Activated CD4-positive, alpha-beta memory T cell treated with anti-CD3 and anti-CD28 coated beads, Interleukin-2, amount 10 ng/mL, durations not matched to agents 7 days and 5 days (primary cell): ENCODE measurements at regions of chr5 and their contacts with region 1.

Region 1: DNA sequence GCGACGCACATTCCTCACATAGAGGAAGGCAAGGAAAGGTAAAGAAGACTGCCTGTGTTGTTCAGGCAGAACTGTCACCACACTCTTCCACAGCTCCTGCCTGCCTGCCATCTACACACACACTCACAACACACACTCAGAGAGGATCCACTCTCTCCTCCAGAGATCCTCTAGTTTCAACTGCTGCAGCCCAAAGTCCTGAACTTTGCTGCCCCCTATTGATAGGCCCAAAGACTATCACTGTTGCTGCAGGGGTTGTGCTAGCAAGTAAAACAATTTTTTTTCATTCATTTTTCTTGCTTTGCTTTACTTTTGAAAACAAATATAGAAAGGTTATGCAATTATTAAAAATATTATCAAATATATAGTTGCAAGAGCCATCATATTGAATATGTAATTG is 5.9 kb upstream of the CFAP90 start:
- DNase-seq: peak; percentile 58
- H3K4me3 Mint-ChIP-seq: no peak overlapping the region
- H3K27ac Mint-ChIP-seq: no peak overlapping the region
- H3K4me1 Mint-ChIP-seq: peaks cover 40% of the 10 kb centered on the region
- H3K27me3 Mint-ChIP-seq: peaks cover 2% of the 10 kb centered on the region

Region 2: GRCh38 chr5:7815892-7816534 is 40.8 kb before region 1 on chr5:
- CTCF ChIA-PET with region 1: interaction called, 27 read pairs
- POLR2A ChIA-PET with region 1: interaction called, 3 read pairs
- DNase-seq: peak; percentile 68
- H3K4me3 Mint-ChIP-seq: no peak overlapping the region
- H3K27ac Mint-ChIP-seq: no peak overlapping the region
- H3K4me1 Mint-ChIP-seq: no peaks in the 10 kb centered on the region
- H3K27me3 Mint-ChIP-seq: peaks cover 20% of the 10 kb centered on the region

Region 3: GRCh38 chr5:7868773-7869473 is 12.1 kb after region 1 on chr5 and contains the starts of genes FASTKD3 and MTRR:
- CTCF ChIA-PET with region 1: interaction called, 62 read pairs
- POLR2A ChIA-PET with region 1: interaction called, 99 read pairs
- DNase-seq: peak; percentile 93
- H3K4me3 Mint-ChIP-seq: peak within 1 kb of the TSS; percentile 99
- H3K27ac Mint-ChIP-seq: peak within 1 kb of the TSS; percentile 83
- H3K4me1 Mint-ChIP-seq: peaks cover 76% of the 10 kb centered on the region
- H3K27me3 Mint-ChIP-seq: no peaks in the 10 kb centered on the region
- total RNA-seq, gene FASTKD3: 12.5 to 13.4 TPM
- total RNA-seq, gene MTRR: 58.4 to 65.3 TPM

Region 4: GRCh38 chr5:7878381-7878873 is 21.6 kb after region 1 on chr5:
- CTCF ChIA-PET with region 1: interaction called, 54 read pairs
- POLR2A ChIA-PET with region 1: interaction called, 38 read pairs
- DNase-seq: no peak
- H3K4me3 Mint-ChIP-seq: no peak overlapping the region
- H3K27ac Mint-ChIP-seq: no peak overlapping the region
- H3K4me1 Mint-ChIP-seq: peaks cover 54% of the 10 kb centered on the region
- H3K27me3 Mint-ChIP-seq: no peaks in the 10 kb centered on the region

Region 5: DNA sequence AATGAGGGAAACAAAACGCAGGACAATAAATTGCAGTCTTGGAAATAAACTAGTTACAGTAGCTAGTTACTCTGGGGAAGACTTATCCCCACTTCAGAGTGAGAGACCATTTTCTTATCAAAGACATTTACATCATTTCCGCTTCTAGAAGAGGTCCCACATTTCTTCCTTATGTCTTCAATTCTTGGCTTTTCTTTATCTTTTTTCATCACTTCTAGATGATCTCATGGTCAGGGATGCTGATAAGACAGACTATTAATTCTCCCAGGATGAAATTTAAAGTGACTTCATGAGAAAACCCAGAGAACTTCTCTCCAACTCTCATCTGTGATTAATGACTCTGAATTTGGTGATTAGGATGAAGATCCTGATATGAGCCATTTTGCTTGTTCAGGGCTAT is 241.2 kb after region 1 on chr5:
- CTCF ChIA-PET with region 1: no interaction called
- POLR2A ChIA-PET with region 1: no interaction called
- DNase-seq: no peak
- H3K4me3 Mint-ChIP-seq: no peak overlapping the region
- H3K27ac Mint-ChIP-seq: no peak overlapping the region
- H3K4me1 Mint-ChIP-seq: no peaks in the 10 kb centered on the region
- H3K27me3 Mint-ChIP-seq: no peaks in the 10 kb centered on the region